ENCODE measurements at regions of chr12 and their contacts with region 1.

Region 1: GRCh38 chr12:121626087-121626852 is at the start of gene ORAI1:
- DNase-seq: peak; percentile 96
- H3K4me3 Mint-ChIP-seq: peak within 1 kb of the TSS; percentile 92
- H3K27ac Mint-ChIP-seq: peak within 1 kb of the TSS; percentile 99
- H3K4me1 Mint-ChIP-seq: peaks cover 37% of the 10 kb centered on the region
- H3K27me3 Mint-ChIP-seq: no peaks in the 10 kb centered on the region
- total RNA-seq, gene ORAI1: 41.6 to 43.2 TPM

Region 2: DNA sequence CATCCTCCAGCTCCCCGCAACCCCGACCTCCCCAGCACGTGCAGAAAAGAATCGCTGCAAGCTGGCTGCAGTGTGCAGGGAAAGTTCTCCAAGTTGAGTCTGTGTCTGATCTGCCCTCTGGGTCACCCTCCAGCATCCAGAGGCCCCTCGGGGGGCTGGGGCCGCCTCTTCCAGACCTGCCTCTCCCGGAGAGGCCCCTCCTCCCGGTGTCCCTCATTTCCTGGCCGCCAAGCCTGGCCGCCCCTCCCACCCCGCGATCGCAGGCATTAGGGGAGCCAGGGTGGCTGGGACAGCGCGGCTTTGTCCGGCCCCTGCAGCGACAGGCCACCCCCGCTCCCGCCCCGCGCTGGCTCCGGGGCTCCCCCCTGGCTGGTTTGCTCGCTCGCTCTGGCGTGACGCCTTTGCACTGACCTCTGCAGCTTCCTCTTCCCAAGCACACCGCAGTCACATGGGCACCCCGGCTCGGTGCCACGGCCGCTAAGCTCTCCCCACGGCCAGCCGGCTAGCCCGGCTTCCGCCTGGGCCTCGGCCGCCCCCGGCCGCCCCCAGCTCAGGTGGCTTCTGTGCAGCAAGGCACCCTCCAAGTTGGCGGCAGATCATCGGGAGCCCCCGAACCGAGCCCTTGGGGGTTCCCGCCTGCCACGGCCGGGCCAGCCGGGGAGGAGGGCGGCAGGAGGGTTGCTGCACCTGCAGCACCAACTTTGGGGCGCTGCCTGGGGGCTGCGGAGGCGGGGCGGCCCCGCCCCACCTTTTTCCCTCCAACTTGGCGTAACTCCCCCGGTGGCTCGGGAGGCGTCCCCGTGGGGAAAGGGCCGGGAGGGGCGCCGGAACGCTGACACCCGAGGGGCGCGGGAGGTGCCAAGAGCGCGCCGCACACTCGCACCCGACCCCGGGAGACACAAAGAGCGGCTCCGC is 89.1 kb before region 1 on chr12:
- CTCF ChIA-PET with region 1: interaction called, 10 read pairs
- POLR2A ChIA-PET with region 1: interaction called, 27 read pairs
- intact Hi-C with region 1: loop called (anchors 1 kb)
- DNase-seq: peak; percentile 83
- H3K4me3 Mint-ChIP-seq: peak overlapping the region; percentile 70
- H3K27ac Mint-ChIP-seq: peak overlapping the region; percentile 60
- H3K4me1 Mint-ChIP-seq: peaks cover 43% of the 10 kb centered on the region
- H3K27me3 Mint-ChIP-seq: no peaks in the 10 kb centered on the region

Region 3: GRCh38 chr12:121579981-121580868 is 46.0 kb before region 1 on chr12:
- CTCF ChIA-PET with region 1: interaction called, 41 read pairs
- POLR2A ChIA-PET with region 1: interaction called, 22 read pairs
- intact Hi-C with region 1: loop called (anchors 1 kb)
- DNase-seq: peak; percentile 85
- H3K4me3 Mint-ChIP-seq: peak overlapping the region; percentile 86
- H3K27ac Mint-ChIP-seq: peak overlapping the region; percentile 92
- H3K4me1 Mint-ChIP-seq: peaks cover 33% of the 10 kb centered on the region
- H3K27me3 Mint-ChIP-seq: no peaks in the 10 kb centered on the region

Region 4: GRCh38 chr12:121637231-121637914 is 11.1 kb after region 1 on chr12:
- CTCF ChIA-PET with region 1: interaction called, 20 read pairs
- POLR2A ChIA-PET with region 1: interaction called, 45 read pairs
- intact Hi-C with region 1: no loop called
- DNase-seq: peak; percentile 79
- H3K4me3 Mint-ChIP-seq: peak overlapping the region; percentile 45
- H3K27ac Mint-ChIP-seq: peak overlapping the region; percentile 90
- H3K4me1 Mint-ChIP-seq: peaks cover 47% of the 10 kb centered on the region
- H3K27me3 Mint-ChIP-seq: no peaks in the 10 kb centered on the region

Region 5: DNA sequence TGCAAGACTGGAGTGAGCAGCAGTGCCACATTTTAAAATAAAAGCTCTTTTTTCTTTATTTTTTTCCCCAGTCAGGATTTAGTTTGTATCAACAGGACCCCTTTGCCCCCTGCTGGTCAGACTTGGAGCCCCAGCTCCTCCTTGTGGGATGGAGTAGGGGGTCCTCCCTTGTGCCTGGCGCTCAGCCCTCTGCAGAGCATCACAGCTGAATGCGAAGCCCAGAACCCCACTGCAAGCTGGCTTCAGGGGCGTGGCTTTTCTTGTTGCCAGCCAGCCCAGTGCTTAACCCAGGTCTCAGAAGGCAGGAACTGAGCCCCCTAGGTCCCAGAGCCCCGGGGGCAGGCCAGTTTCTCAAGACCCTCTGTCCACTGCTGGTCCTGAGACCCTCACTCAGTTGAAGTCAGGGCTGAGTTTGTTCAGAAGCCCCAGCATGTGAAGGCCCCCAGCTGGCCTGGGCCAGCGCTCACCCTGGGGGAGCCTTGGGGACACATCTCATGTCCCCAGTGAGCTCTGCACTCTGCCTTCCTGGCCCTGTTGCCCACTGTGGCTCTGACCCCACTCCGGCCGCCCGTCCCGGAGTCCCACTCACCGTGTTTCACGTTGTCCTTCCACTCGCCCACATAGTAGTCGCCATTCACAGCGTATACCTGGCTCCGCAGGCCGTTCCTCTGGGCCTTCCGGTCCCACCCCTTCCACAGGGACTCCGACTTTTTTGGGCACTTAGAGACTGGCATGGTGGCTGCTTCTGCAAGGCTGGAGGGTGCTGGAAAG is 42.7 kb after region 1 on chr12:
- CTCF ChIA-PET with region 1: interaction called, 109 read pairs
- POLR2A ChIA-PET with region 1: interaction called, 46 read pairs
- intact Hi-C with region 1: loop called (anchors 1 kb)
- DNase-seq: peak; percentile 68
- H3K4me3 Mint-ChIP-seq: no peak overlapping the region
- H3K27ac Mint-ChIP-seq: peak overlapping the region; percentile 62
- H3K4me1 Mint-ChIP-seq: peaks cover 51% of the 10 kb centered on the region
- H3K27me3 Mint-ChIP-seq: no peaks in the 10 kb centered on the region

Region 6: DNA sequence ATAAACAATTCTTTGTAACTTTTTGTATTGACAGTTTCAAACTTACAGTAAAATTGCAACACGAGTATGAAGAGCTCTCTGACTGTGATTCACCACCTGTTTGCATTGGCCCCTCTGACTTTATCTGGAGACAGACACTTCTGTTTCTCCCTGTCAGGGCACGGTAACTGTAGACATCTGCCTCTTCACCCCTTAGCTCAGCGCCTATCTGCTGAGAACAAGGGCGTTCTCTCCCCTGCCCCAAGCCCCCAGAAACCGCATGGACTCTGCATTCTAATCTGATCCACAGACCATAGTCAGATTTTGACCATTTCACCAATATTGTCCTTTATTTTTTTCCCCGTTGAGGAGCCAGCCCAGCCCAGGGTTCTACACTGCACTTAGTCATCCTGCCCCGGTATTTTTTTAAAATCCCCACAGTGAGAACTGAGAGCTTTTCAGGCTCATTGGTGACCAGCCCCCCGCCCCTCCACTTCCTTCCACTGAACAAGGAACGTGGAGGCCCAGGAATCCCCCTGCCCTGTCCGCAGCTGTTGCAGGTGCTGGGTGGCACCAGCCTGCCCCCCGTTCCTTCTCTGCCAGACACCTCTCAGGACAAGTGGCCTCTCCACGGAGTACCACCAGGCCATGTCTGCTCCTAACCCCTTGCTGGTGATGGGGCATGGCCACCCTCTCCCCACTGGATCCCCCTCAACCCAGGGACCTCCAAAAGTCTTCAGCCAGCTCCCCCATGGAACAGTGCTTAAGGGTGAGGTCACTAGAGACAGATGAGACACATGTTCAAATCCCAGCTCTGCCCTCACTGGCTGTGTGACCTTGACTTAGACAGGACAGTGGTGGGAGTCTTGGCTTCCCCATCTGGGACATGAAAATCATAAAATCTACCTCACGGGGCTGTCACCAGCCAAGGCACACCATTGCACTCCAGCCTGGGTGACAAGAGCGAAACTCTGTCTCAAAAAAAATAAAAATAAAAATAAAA is 156.0 kb after region 1 on chr12:
- CTCF ChIA-PET with region 1: no interaction called
- POLR2A ChIA-PET with region 1: interaction called, 5 read pairs
- intact Hi-C with region 1: loop called (anchors 1 kb)
- DNase-seq: peak; percentile 88
- H3K4me3 Mint-ChIP-seq: peak overlapping the region; percentile 68
- H3K27ac Mint-ChIP-seq: peak overlapping the region; percentile 96
- H3K4me1 Mint-ChIP-seq: peaks cover 70% of the 10 kb centered on the region
- H3K27me3 Mint-ChIP-seq: no peaks in the 10 kb centered on the region